ENCODE measurements at regions of chr1 and their contacts with region 1.

Region 1: DNA sequence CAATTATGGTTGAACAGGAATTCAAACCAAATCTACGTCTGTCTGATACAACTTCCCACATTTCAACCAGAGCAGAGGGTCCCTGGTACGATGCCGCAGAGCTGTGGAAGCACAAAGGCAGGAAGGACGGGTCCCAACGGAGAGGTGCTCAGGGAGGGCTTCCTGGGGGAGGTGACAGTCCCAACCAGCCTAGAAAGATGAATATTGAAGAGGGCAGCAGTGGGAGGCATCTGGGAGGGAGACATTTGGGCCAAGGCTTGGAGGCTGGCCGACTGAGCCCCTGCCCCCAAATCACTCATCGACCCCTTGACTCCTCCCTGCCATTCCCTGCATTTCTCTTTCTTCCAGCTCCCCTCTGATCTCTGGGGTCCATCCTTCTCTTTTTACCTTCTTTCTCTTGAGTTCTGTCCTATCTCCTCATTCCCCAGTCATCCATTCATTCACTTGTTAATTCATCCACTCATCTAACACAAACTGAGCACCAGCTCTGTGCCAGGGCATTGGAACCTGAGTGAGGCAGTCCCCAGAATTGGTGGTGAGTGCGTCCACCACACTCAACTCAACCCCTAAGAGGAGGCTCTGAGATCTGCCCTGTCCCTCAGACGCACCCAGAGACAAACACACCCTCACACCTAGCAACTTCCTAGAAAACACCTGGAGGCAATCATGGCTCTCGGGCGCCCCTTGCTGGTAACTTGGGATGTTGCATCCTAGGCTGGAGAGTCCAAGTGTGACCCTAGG is 13.2 kb upstream of the CELA3B start:
- DNase-seq: peak; percentile 88
- H3K4me3 ChIP-seq: no peak overlapping the region
- H3K27ac ChIP-seq: no peak overlapping the region
- H3K4me1 ChIP-seq: peaks cover 0 to 4% (median 0%) of the 10 kb centered on the region in 4 donors
- H3K27me3 ChIP-seq: no peaks in the 10 kb centered on the region
- CTCF ChIP-seq: peak; percentile 89 to 96 (median 92)
- EP300 ChIP-seq: no peak
- POLR2A ChIP-seq: no peak

Region 2: GRCh38 chr1:21436488-21437340 is 526.9 kb before region 1 on chr1:
- in situ Hi-C with region 1: no loop called
- intact Hi-C with region 1: no loop called
- DNase-seq: peak; percentile 45
- H3K4me3 ChIP-seq: peak overlapping the region in 3 of 4 donors; percentile 9 to 46 (median 35)
- H3K27ac ChIP-seq: no peak overlapping the region
- H3K4me1 ChIP-seq: peaks cover 0 to 18% (median 11%) of the 10 kb centered on the region in 4 donors
- H3K27me3 ChIP-seq: peaks cover 13% of the 10 kb centered on the region
- CTCF ChIP-seq: no peak
- EP300 ChIP-seq: no peak
- POLR2A ChIP-seq: no peak

Region 3: GRCh38 chr1:21669258-21670058 is 294.2 kb before region 1 on chr1 and contains the start of gene RAP1GAP:
- in situ Hi-C with region 1: no loop called
- intact Hi-C with region 1: no loop called
- DNase-seq: peak; percentile 52
- H3K4me3 ChIP-seq: peak within 1 kb of the TSS in 3 of 4 donors; percentile 23 to 57 (median 28)
- H3K27ac ChIP-seq: no peak within 1 kb of the TSS
- H3K4me1 ChIP-seq: peaks cover 19 to 31% (median 25%) of the 10 kb centered on the region in 4 donors
- H3K27me3 ChIP-seq: peaks cover 58% of the 10 kb centered on the region
- CTCF ChIP-seq: peak in 1 of 5 experiments; percentile 4
- EP300 ChIP-seq: no peak
- POLR2A ChIP-seq: no peak
- total RNA-seq, gene RAP1GAP: 14.1 to 37.4 (median 28.8) TPM

Region 4: GRCh38 chr1:21680918-21681317 is 282.7 kb before region 1 on chr1:
- in situ Hi-C with region 1: loop called in 1 of 4 experiments (anchors 25 kb)
- intact Hi-C with region 1: no loop called
- DNase-seq: no peak
- H3K4me3 ChIP-seq: no peak overlapping the region
- H3K27ac ChIP-seq: no peak overlapping the region
- H3K4me1 ChIP-seq: no peaks in the 10 kb centered on the region
- H3K27me3 ChIP-seq: no peaks in the 10 kb centered on the region
- CTCF ChIP-seq: no peak
- EP300 ChIP-seq: no peak
- POLR2A ChIP-seq: no peak

Region 5: GRCh38 chr1:21814241-21814918 is 149.3 kb before region 1 on chr1:
- in situ Hi-C with region 1: no loop called
- intact Hi-C with region 1: no loop called
- DNase-seq: peak; percentile 31
- H3K4me3 ChIP-seq: peak overlapping the region in 3 of 4 donors; percentile 7 to 45 (median 30)
- H3K27ac ChIP-seq: no peak overlapping the region
- H3K4me1 ChIP-seq: peaks cover 3 to 7% (median 5%) of the 10 kb centered on the region in 4 donors
- H3K27me3 ChIP-seq: peaks cover 20% of the 10 kb centered on the region
- CTCF ChIP-seq: peak; percentile 34 to 63 (median 51)
- EP300 ChIP-seq: no peak
- POLR2A ChIP-seq: no peak

Region 6: GRCh38 chr1:21869620-21870121 is 94.0 kb before region 1 on chr1:
- in situ Hi-C with region 1: loop called in 1 of 4 experiments (anchors 25 kb)
- intact Hi-C with region 1: no loop called
- DNase-seq: peak; percentile 80
- H3K4me3 ChIP-seq: no peak overlapping the region
- H3K27ac ChIP-seq: peak overlapping the region; percentile 31 to 70 (median 64)
- H3K4me1 ChIP-seq: peaks cover 0 to 14% (median 9%) of the 10 kb centered on the region in 4 donors
- H3K27me3 ChIP-seq: no peaks in the 10 kb centered on the region
- CTCF ChIP-seq: no peak
- EP300 ChIP-seq: no peak
- POLR2A ChIP-seq: no peak

Region 7: GRCh38 chr1:23098463-23099170 is 1135.0 kb after region 1 on chr1:
- in situ Hi-C with region 1: no loop called
- intact Hi-C with region 1: no loop called
- DNase-seq: peak; percentile 65
- H3K4me3 ChIP-seq: no peak overlapping the region
- H3K27ac ChIP-seq: no peak overlapping the region
- H3K4me1 ChIP-seq: peaks cover 28 to 56% (median 34%) of the 10 kb centered on the region in 4 donors
- H3K27me3 ChIP-seq: no peaks in the 10 kb centered on the region
- CTCF ChIP-seq: peak; percentile 87 to 96 (median 93)
- EP300 ChIP-seq: no peak
- POLR2A ChIP-seq: no peak

Measured in transverse colon (tissue), 4 donors.